Pancreas (tissue), 10 donors: ENCODE measurements at regions of chr9 and their contacts with region 1.

Region 1: DNA sequence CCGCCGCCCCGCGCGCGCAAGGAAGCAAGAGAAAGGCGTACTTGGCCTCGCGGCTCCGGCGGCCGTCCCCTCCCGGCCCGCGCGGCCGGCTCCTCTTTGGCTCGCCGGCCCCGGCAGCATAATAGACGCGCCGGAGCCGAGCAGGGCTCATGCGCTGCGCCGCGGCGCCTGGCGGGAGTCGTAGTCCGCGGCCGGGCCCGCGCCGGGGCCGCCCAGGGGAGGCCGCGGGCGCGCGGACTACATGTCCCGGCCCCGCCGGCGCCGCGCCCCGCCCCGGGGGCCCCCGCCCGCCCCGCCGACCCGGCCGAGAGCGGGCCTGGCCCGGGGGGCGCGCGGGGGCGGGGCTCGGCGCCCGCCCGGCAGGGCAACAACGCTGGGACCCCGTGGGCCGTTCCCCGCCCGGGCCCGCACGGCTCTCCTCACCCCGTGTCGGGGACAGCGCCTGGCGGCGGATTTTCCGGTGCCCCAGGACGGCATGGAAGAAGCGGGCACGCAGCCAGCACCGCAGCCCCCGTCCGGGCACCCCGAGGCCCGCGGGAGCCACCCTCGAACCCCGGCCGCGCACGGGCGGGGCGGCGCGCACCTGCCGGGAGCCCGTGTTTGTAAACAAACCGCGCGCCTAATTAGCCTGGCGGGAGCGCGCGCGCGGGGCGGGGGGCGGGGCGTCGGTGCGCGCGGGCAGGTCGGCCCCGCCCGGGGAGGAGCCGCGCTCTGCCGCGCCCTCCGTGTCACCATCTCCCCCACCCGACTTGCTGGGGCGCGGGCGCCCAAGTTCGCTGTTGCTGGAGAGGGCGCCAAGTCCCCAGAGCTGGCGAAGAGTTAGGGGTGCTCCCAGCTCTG is at the start of gene BRD3:
- DNase-seq: peak; percentile 75 to 93 (median 87)
- ATAC-seq: peak; percentile 83 to 84 (median 84)
- H3K4me3 ChIP-seq: peak within 1 kb of the TSS; percentile 61 to 83 (median 74)
- H3K27ac ChIP-seq: peak within 1 kb of the TSS; percentile 89 to 97 (median 94)
- H3K4me1 ChIP-seq: peaks cover 0 to 7% (median 7%) of the 10 kb centered on the region in 3 donors
- H3K27me3 ChIP-seq: no peaks in the 10 kb centered on the region
- CTCF ChIP-seq: no peak
- total RNA-seq, gene BRD3: 14.4 to 36.3 (median 17.2) TPM

Region 2: GRCh38 chr9:134135343-134136118 is 67.4 kb after region 1 on chr9 and contains the start of gene WDR5:
- intact Hi-C with region 1: loop called in 1 of 3 experiments (anchors 10 kb)
- DNase-seq: peak; percentile 89 to 99 (median 95)
- ATAC-seq: peak; percentile 84 to 90 (median 85)
- H3K4me3 ChIP-seq: peak within 1 kb of the TSS; percentile 85 to 100 (median 98)
- H3K27ac ChIP-seq: peak within 1 kb of the TSS; percentile 89 to 94 (median 92)
- H3K4me1 ChIP-seq: peaks cover 6 to 26% (median 15%) of the 10 kb centered on the region in 3 donors
- H3K27me3 ChIP-seq: no peaks in the 10 kb centered on the region
- CTCF ChIP-seq: no peak
- total RNA-seq, gene WDR5: 14.0 to 20.2 (median 15.9) TPM